Endothelial cell of umbilical vein (primary cell): ENCODE measurements at regions of chr6 and their contacts with region 1.

Region 1: GRCh38 chr6:148177589-148178233 is 164.9 kb upstream of the SASH1 start:
- DNase-seq: peak; percentile 72
- H3K4me3 ChIP-seq: no peak overlapping the region
- H3K27ac ChIP-seq: no peak overlapping the region
- H3K4me1 ChIP-seq: peaks cover 5% of the 10 kb centered on the region
- H3K27me3 ChIP-seq: no peaks in the 10 kb centered on the region
- CTCF ChIP-seq: peak; percentile 70 to 82
- POLR2A ChIP-seq: no peak

Region 2: DNA sequence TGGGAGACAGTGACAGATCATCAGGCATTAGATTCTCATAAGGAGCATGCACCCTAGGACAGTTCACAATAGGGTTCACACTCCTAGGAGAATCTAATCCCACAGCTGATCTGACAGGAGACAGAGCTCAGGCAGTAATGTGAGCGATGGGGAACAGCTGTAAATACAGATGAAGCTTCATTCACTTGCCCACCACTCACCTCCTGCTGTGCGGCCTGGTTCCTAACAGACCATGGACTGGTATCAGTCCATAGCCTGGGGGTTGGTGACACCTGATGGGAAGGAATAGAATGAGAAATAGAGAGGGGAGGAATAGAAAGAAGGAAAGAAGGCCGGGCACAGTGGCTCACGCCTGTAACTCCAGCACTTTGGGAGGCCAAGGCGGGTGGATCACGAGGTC is 171.9 kb before region 1 on chr6:
- CTCF ChIA-PET with region 1: no interaction called
- POLR2A ChIA-PET with region 1: no interaction called
- dilution Hi-C with region 1: no loop called
- intact Hi-C with region 1: no loop called
- DNase-seq: no peak
- H3K4me3 ChIP-seq: no peak overlapping the region
- H3K27ac ChIP-seq: no peak overlapping the region
- H3K4me1 ChIP-seq: no peaks in the 10 kb centered on the region
- H3K27me3 ChIP-seq: no peaks in the 10 kb centered on the region
- CTCF ChIP-seq: no peak
- POLR2A ChIP-seq: no peak

Region 3: GRCh38 chr6:148144917-148145521 is 32.7 kb before region 1 on chr6:
- CTCF ChIA-PET with region 1: interaction called, 13 read pairs
- POLR2A ChIA-PET with region 1: no interaction called
- dilution Hi-C with region 1: no loop called
- intact Hi-C with region 1: no loop called
- DNase-seq: peak; percentile 74
- H3K4me3 ChIP-seq: no peak overlapping the region
- H3K27ac ChIP-seq: peak overlapping the region; percentile 99
- H3K4me1 ChIP-seq: peaks cover 41% of the 10 kb centered on the region
- H3K27me3 ChIP-seq: no peaks in the 10 kb centered on the region
- CTCF ChIP-seq: peak; percentile 75 to 81
- POLR2A ChIP-seq: no peak

Region 4: GRCh38 chr6:148250975-148251685 is 73.4 kb after region 1 on chr6:
- CTCF ChIA-PET with region 1: interaction called, 18 read pairs
- POLR2A ChIA-PET with region 1: no interaction called
- dilution Hi-C with region 1: no loop called
- intact Hi-C with region 1: loop called (anchors 1 kb)
- DNase-seq: peak; percentile 42
- H3K4me3 ChIP-seq: no peak overlapping the region
- H3K27ac ChIP-seq: no peak overlapping the region
- H3K4me1 ChIP-seq: no peaks in the 10 kb centered on the region
- H3K27me3 ChIP-seq: no peaks in the 10 kb centered on the region
- CTCF ChIP-seq: peak in 1 of 2 donors; percentile 16
- POLR2A ChIP-seq: no peak

Region 5: GRCh38 chr6:148329596-148330381 is 152.1 kb after region 1 on chr6:
- CTCF ChIA-PET with region 1: interaction called, 16 read pairs
- POLR2A ChIA-PET with region 1: no interaction called
- dilution Hi-C with region 1: no loop called
- intact Hi-C with region 1: no loop called
- DNase-seq: peak; percentile 83
- H3K4me3 ChIP-seq: no peak overlapping the region
- H3K27ac ChIP-seq: peak overlapping the region; percentile 46
- H3K4me1 ChIP-seq: peaks cover 31% of the 10 kb centered on the region
- H3K27me3 ChIP-seq: no peaks in the 10 kb centered on the region
- CTCF ChIP-seq: no peak
- POLR2A ChIP-seq: no peak

Region 6: DNA sequence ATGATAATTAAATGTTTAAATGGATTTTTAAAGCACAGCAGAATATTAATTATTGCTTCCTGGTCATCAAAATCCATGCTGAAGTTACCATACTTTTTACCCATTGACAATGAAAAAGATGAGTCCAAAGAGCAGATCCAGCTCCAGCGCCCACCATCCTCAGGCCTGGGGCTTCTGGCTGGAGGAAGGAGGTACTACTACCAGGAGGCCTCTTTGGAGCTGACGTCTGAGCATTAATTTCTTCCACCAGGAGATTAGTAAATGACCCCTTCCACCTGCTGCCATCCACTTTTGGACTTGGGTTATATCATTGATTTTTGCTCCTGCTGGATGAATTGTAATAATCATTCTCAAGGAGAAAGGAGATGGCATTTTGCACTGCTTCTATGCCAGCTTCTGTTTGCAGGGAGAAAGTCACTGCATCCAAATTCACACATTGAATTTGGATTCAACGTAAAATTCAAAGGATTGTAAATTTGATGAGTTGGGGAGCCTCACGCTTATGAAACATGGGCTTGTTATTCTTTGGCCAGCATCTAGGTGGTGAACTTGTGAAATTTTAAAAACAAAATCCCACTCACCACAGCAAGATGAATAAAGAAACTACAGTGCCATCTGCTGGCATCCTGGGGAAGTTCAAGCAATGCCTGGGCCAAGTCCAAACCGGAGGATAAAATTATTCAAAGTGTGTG is 286.8 kb after region 1 on chr6:
- CTCF ChIA-PET with region 1: interaction called, 25 read pairs
- POLR2A ChIA-PET with region 1: no interaction called
- dilution Hi-C with region 1: no loop called
- intact Hi-C with region 1: loop called (anchors 1 kb)
- DNase-seq: peak; percentile 86
- H3K4me3 ChIP-seq: no peak overlapping the region
- H3K27ac ChIP-seq: peak overlapping the region; percentile 42
- H3K4me1 ChIP-seq: peaks cover 37% of the 10 kb centered on the region
- H3K27me3 ChIP-seq: no peaks in the 10 kb centered on the region
- CTCF ChIP-seq: peak; percentile 76 to 94
- POLR2A ChIP-seq: no peak

Region 7: DNA sequence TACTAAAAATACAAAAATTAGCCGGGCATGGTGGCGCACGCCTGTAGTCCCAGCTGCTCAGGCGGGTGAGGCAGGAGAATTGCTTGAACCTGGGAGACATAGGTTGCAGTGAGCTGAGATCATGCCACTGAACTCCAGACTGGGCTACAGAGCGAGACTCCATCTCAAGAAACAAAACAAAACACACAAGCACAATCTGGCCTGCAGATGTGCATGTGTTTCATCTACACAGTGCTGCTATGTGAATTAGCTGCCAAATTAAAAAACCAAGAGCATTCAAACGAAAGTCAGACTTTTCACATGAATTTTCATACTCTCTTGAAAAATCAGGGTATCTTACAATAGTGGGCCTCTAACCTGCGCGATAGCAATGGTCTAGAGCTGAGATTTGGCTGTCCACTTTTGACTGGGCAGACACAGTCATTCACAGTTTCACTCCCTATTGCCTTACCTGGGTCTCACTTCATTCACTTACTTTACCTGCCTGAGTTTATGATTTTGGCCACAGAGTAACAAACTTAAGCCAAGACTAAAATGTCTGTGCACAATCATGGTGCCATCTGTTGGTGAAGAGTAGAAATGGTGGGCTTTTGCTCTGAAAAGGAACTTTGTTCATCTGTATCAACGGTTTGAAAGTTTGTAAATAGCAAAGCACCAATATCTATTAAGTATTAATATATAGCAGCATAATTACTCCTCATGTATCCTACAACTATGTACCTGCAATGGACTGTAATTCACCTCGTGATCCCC is 430.7 kb after region 1 on chr6:
- CTCF ChIA-PET with region 1: no interaction called
- POLR2A ChIA-PET with region 1: no interaction called
- dilution Hi-C with region 1: no loop called
- intact Hi-C with region 1: loop called (anchors 2 kb)
- DNase-seq: peak; percentile 51
- H3K4me3 ChIP-seq: no peak overlapping the region
- H3K27ac ChIP-seq: no peak overlapping the region
- H3K4me1 ChIP-seq: no peaks in the 10 kb centered on the region
- H3K27me3 ChIP-seq: no peaks in the 10 kb centered on the region
- CTCF ChIP-seq: peak; percentile 40 to 59
- POLR2A ChIP-seq: no peak